ENCODE measurements at regions of chr6 and their contacts with region 1.

Region 1: DNA sequence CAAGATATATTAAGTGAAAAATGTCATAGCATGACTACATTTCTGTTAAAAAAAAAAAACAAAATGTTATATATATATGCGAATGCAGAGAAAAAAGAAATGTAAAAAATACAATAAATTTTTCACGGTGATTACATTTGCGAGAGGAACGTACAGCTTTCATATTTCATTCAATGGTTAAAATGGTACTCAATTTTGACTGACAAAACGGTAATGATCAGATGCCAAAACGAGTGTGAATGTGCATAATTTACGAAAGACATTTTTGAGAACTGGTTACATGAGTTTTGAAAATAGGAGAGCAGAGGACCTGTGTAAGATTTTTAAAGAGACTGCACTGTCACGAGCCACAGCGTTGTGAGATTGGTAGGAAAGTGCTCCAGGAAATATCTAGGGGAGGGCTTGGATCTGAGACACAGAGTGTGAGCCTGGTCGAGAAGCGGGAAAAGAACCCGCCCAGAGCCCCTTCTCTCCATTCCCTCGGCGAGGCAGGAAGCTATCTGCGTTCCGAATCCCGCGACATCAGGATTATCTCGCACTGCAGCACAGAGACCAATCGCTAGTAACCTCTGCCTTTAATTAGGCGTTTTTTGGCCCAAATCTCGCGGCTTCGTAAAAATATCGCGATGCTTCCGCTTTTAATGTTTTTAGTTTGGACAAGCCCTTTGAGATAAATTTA is 28.5 kb downstream of the TRIM27 start:
- DNase-seq: peak; percentile 94
- H3K4me3 ChIP-seq: peak overlapping the region; percentile 64 to 80 (median 76)
- H3K27ac ChIP-seq: peak overlapping the region; percentile 98
- H3K4me1 ChIP-seq: no peaks in the 10 kb centered on the region
- H3K27me3 ChIP-seq: peaks cover 1% of the 10 kb centered on the region
- CTCF ChIP-seq: no peak

Region 2: DNA sequence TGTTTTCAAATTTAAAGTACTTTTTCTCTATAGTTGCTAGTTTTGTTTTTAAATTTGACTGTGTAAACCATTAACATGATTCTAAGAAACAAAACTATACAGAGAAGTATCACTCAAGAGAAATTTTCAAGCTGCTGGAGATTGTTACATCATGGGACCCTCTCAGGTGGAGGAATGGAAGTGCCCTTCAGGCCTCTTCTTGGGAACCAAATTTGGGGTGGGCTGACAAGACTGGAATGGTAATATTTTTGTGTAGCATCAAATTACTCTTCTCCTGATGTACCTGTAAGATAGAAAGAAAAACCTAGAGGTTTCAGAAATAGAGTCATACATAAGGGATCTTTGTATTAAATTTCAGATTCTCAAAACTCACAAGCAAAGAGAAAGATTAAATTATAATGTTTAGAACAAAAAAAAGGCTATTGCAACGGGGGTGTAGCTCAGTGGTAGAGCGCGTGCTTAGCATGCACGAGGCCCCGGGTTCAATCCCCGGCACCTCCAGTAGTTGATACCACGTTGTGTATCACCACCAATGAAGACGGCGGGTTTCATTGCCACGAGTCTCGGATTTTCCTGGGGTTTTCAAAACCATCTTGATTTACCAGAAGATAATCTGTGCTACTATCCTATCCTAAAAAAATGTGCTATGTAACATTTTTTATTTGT is 175.9 kb before region 1 on chr6:
- CTCF ChIA-PET with region 1: no interaction called
- dilution Hi-C with region 1: no loop called
- in situ Hi-C with region 1: no loop called
- intact Hi-C with region 1: no loop called
- DNase-seq: peak; percentile 63
- H3K4me3 ChIP-seq: no peak overlapping the region
- H3K27ac ChIP-seq: no peak overlapping the region
- H3K4me1 ChIP-seq: no peaks in the 10 kb centered on the region
- H3K27me3 ChIP-seq: no peaks in the 10 kb centered on the region
- CTCF ChIP-seq: no peak

Region 3: GRCh38 chr6:28769626-28770402 is 125.5 kb before region 1 on chr6:
- CTCF ChIA-PET with region 1: interaction called, 3 read pairs
- dilution Hi-C with region 1: no loop called
- in situ Hi-C with region 1: no loop called
- intact Hi-C with region 1: loop called (anchors 10 kb)
- DNase-seq: peak; percentile 72
- H3K4me3 ChIP-seq: no peak overlapping the region
- H3K27ac ChIP-seq: no peak overlapping the region
- H3K4me1 ChIP-seq: no peaks in the 10 kb centered on the region
- H3K27me3 ChIP-seq: peaks cover 60% of the 10 kb centered on the region
- CTCF ChIP-seq: peak; percentile 31 to 60

Region 4: GRCh38 chr6:28863604-28864320 is 31.5 kb before region 1 on chr6:
- CTCF ChIA-PET with region 1: no interaction called
- dilution Hi-C with region 1: no loop called
- in situ Hi-C with region 1: no loop called
- intact Hi-C with region 1: loop called (anchors 1 kb)
- DNase-seq: peak; percentile 76
- H3K4me3 ChIP-seq: peak overlapping the region; percentile 57 to 85 (median 69)
- H3K27ac ChIP-seq: peak overlapping the region; percentile 50
- H3K4me1 ChIP-seq: peaks cover 12% of the 10 kb centered on the region
- H3K27me3 ChIP-seq: no peaks in the 10 kb centered on the region
- CTCF ChIP-seq: no peak

Region 5: GRCh38 chr6:28923318-28924102 is 28.2 kb after region 1 on chr6 and contains the start of gene TRIM27:
- CTCF ChIA-PET with region 1: no interaction called
- dilution Hi-C with region 1: no loop called
- in situ Hi-C with region 1: no loop called
- intact Hi-C with region 1: loop called (anchors 1 kb)
- DNase-seq: peak; percentile 81
- H3K4me3 ChIP-seq: peak within 1 kb of the TSS; percentile 67 to 88 (median 73)
- H3K27ac ChIP-seq: peak within 1 kb of the TSS; percentile 82
- H3K4me1 ChIP-seq: peaks cover 19% of the 10 kb centered on the region
- H3K27me3 ChIP-seq: no peaks in the 10 kb centered on the region
- CTCF ChIP-seq: peak in 1 of 2 donors; percentile 2
- total RNA-seq, gene TRIM27: 45.3 to 49.2 TPM

Region 6: GRCh38 chr6:29016559-29017427 is 121.5 kb after region 1 on chr6:
- CTCF ChIA-PET with region 1: no interaction called
- dilution Hi-C with region 1: no loop called
- in situ Hi-C with region 1: no loop called
- intact Hi-C with region 1: loop called (anchors 2 kb)
- DNase-seq: peak; percentile 66
- H3K4me3 ChIP-seq: peak overlapping the region; percentile 53 to 57 (median 54)
- H3K27ac ChIP-seq: no peak overlapping the region
- H3K4me1 ChIP-seq: peaks cover 9% of the 10 kb centered on the region
- H3K27me3 ChIP-seq: no peaks in the 10 kb centered on the region
- CTCF ChIP-seq: peak; percentile 84 to 93

Measured in mammary epithelial cell (primary cell).